Gastrocnemius medialis (tissue), 4 donors: ENCODE measurements at regions of chr16 and their contacts with region 1.

Region 1: DNA sequence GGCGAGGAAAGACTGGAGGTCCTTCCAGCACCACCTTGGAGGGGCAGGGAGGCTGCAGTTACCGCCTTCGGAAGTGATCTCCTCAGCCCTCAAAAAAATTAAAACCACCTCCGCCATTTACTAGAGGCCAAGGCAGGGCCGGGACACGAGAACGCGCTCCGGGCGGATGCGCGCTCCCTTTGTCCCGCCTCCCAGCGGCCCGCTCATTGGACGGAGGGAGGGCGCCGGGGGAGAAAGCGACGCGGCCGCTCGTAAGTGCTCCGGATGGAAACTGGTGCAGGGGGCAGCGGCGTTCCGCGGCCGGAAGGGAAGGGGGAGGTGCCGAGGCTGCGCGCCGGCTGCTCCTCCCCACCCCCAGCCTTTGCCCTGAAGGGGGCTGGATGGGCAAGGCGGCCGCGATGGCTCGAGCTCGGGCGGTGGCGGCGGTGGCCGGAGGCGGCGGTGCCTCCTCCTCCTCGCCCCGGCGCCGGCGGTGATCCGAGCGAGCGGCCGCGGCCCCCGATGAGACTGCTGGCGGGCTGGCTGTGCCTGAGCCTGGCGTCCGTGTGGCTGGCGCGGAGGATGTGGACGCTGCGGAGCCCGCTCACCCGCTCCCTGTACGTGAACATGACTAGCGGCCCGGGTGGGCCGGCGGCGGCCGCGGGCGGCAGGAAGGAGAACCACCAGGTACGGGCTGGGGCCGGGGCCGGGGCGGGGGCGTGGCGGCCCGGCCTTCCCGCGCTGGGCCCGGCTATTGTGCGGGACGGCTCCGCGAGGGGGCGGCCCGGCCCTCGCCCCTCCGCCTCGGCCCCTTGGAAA is at the start of gene METTL9:
- DNase-seq: peak; percentile 91 to 93
- ATAC-seq: peak; percentile 92 to 95
- H3K4me3 ChIP-seq: peak within 1 kb of the TSS; percentile 62 to 92 (median 82)
- H3K27ac ChIP-seq: peak within 1 kb of the TSS; percentile 88 to 97 (median 90)
- H3K4me1 ChIP-seq: peaks cover 36 to 45% of the 10 kb centered on the region in 2 donors
- H3K27me3 ChIP-seq: no peaks in the 10 kb centered on the region
- CTCF ChIP-seq: peak in 2 of 5 experiments; percentile 11 to 15
- POLR2A ChIP-seq: peak; percentile 86 to 91
- total RNA-seq, gene METTL9: 87.2 to 109 (median 96.8) TPM

Region 2: DNA sequence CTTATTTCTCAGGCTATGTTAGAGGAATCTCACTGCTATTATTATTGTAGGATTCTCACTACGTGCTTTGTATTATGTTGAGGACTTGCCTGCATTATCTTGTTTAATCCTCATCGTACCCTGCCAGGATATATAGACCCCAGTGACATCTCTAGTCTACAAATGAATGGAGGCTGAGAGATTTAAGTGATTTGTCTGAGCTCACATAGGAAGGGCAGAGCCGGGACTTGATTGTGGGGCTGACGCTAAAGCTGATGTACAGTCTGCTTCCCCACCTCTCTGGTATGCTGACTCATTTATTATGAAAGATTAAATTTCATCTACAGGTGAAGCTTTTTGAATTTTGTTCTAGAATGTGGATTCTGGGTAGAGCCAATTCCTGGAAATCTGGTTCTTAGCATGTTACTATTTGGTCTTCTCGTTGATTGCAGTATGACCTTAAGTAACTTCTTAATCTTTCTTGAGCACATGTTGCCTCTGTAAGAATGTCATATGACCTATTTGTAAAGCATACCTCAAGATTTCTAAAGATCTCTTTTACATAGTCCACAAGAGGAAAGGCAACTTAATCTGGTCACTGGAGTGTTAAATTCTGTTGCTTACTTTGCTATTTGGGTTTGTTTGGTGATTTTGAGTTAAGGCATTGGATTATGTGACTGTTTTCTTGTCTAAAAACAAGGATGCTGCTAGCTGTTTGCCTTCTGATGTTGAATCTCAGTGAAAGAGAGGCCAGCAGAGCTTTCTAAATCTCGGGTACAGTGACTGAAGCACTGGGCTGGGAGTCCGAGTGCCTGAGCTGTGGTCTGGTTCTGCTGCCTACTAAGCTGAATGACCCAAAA is 12.3 kb after region 1 on chr16:
- in situ Hi-C with region 1: no loop called
- intact Hi-C with region 1: loop called (anchors 1 kb)
- DNase-seq: peak in 1 of 2 donors; percentile 27
- ATAC-seq: peak; percentile 95 to 96
- H3K4me3 ChIP-seq: peak overlapping the region in 1 of 4 donors; percentile 26
- H3K27ac ChIP-seq: peak overlapping the region; percentile 76 to 84 (median 83)
- H3K4me1 ChIP-seq: peaks cover 55% of the 10 kb centered on the region in 2 donors
- H3K27me3 ChIP-seq: no peaks in the 10 kb centered on the region
- CTCF ChIP-seq: no peak
- POLR2A ChIP-seq: no peak

Region 3: DNA sequence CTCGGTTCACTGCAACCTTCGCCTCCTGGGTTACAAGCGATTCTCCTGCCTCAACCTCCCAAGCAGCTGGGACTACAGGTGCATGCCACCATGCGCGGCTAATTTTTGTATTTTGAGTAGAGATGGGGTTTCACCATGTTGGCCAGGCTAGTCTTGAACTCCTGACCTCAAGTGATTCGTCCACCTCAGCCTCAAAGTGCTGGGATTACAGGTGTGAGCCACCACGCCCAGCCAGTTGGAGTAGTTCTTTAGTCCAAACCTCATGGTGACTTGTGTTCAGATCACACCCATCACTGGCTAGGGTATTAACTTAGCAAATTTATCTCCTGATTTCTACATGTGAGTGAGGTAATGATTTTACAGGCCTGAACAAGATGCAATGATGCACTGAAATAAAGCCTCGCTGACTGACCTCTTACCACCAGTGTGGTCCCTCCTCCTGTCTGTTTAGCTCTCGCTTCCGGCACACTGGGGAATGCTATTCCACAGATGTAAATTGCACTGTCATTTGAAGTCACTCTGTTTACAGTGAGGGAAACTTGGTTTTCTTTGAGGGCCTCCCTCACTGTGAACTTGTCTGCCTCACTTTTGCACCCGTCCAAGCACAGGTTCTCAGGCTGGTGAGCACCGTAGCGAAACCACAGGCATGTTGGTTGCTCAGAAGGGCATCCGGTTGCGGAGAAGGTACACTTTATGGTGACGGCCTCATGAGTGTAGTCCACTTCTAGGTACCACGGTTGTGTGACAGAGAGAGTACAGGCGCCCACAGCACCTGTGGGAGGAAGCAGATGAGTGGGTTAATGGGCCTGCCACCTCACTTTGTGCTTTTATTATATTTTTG is 47.5 kb after region 1 on chr16:
- in situ Hi-C with region 1: loop called in 1 of 4 experiments (anchors 10 kb)
- intact Hi-C with region 1: loop called (anchors 5 kb)
- DNase-seq: no peak
- ATAC-seq: no peak
- H3K4me3 ChIP-seq: no peak overlapping the region
- H3K27ac ChIP-seq: peak overlapping the region in 2 of 4 donors; percentile 51 to 64
- H3K4me1 ChIP-seq: peaks cover 12 to 29% of the 10 kb centered on the region in 2 donors
- H3K27me3 ChIP-seq: no peaks in the 10 kb centered on the region
- CTCF ChIP-seq: no peak
- POLR2A ChIP-seq: no peak

Region 4: GRCh38 chr16:21684199-21684598 is 84.8 kb after region 1 on chr16:
- in situ Hi-C with region 1: no loop called
- intact Hi-C with region 1: no loop called
- DNase-seq: no peak
- ATAC-seq: no peak
- H3K4me3 ChIP-seq: no peak overlapping the region
- H3K27ac ChIP-seq: no peak overlapping the region
- H3K4me1 ChIP-seq: no peaks in the 10 kb centered on the region
- H3K27me3 ChIP-seq: no peaks in the 10 kb centered on the region
- CTCF ChIP-seq: no peak
- POLR2A ChIP-seq: no peak

Region 5: DNA sequence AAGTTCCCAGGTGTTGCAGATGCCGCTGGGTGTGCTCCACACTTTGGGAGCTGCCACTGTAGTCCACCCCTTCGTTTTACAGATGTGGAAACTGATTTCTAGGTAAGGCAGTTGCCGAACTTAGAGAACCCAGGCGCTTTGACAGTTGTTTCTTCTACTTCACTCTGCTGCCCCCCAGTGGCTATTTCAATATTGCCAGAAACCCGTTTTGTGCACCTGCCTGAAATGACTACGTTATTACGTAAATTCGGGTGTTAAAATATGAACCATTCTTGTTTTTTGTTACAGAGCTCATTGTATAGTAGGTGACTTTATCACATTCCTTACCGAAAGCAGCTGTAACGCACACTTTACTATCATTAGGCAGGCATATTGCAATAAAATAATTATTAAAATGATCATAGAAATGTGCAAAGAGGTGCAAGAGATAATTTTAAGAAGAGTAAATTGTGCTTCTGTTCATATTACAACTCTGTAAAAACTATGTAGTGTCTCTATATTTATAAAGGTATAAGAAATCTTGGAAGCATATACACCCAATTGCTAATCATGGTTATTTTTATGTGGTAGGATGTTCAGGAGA is 109.2 kb after region 1 on chr16:
- in situ Hi-C with region 1: loop called in 1 of 4 experiments (anchors 25 kb)
- intact Hi-C with region 1: no loop called
- DNase-seq: peak; percentile 34 to 52
- ATAC-seq: peak; percentile 45 to 61
- H3K4me3 ChIP-seq: no peak overlapping the region
- H3K27ac ChIP-seq: no peak overlapping the region
- H3K4me1 ChIP-seq: peaks cover 0 to 7% of the 10 kb centered on the region in 2 donors
- H3K27me3 ChIP-seq: no peaks in the 10 kb centered on the region
- CTCF ChIP-seq: peak; percentile 46 to 85 (median 71)
- POLR2A ChIP-seq: no peak

Region 6: GRCh38 chr16:21982108-21982507 is 382.7 kb after region 1 on chr16:
- in situ Hi-C with region 1: no loop called
- intact Hi-C with region 1: no loop called
- DNase-seq: no peak
- ATAC-seq: no peak
- H3K4me3 ChIP-seq: no peak overlapping the region
- H3K27ac ChIP-seq: no peak overlapping the region
- H3K4me1 ChIP-seq: peaks cover 0 to 13% of the 10 kb centered on the region in 2 donors
- H3K27me3 ChIP-seq: no peaks in the 10 kb centered on the region
- CTCF ChIP-seq: no peak
- POLR2A ChIP-seq: no peak

Region 7: DNA sequence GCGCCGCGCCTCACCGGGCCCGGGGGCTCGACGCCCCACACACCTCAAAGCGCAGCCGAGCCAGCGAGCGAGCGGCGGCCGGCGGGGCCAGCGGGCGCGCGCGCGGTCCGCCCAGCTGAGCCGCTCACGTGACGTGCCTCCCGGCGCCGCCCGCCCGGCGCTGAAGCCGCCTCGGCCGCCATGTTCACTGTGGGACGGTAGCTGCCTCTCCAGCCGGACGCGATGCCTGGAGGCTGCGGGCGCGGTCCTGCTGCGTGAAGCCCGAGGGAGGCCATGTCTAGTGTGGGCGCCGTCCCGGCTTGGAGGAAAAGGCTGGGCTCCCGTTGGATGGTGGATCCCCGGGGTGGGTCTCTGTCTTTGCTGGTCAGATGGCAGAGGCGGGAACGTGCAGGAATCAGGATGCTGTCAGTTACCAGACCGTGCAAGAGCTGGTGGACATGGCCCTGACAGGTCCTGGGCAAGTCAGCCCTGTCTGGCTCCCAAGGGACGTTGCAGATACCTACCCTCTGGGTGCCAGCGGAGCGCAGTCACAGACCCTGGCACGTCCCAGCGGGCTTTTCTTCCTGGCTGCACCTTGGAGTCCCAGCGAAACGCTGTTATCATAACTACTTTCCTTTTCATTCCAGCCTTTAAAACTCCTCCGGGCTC is 1550.0 kb after region 1 on chr16 and contains the start of gene USP31:
- in situ Hi-C with region 1: no loop called
- intact Hi-C with region 1: loop called (anchors 10 kb)
- DNase-seq: peak; percentile 93
- ATAC-seq: peak; percentile 84
- H3K4me3 ChIP-seq: peak within 1 kb of the TSS; percentile 65 to 79 (median 68)
- H3K27ac ChIP-seq: peak within 1 kb of the TSS; percentile 85 to 92 (median 90)
- H3K4me1 ChIP-seq: peaks cover 33 to 35% of the 10 kb centered on the region in 2 donors
- H3K27me3 ChIP-seq: no peaks in the 10 kb centered on the region
- CTCF ChIP-seq: no peak
- POLR2A ChIP-seq: peak; percentile 77 to 79
- total RNA-seq, gene USP31: 13.2 to 23.3 (median 18.7) TPM